Spleen (tissue), 13 donors: ENCODE measurements at regions of chr10 and their contacts with region 1.

Region 1: DNA sequence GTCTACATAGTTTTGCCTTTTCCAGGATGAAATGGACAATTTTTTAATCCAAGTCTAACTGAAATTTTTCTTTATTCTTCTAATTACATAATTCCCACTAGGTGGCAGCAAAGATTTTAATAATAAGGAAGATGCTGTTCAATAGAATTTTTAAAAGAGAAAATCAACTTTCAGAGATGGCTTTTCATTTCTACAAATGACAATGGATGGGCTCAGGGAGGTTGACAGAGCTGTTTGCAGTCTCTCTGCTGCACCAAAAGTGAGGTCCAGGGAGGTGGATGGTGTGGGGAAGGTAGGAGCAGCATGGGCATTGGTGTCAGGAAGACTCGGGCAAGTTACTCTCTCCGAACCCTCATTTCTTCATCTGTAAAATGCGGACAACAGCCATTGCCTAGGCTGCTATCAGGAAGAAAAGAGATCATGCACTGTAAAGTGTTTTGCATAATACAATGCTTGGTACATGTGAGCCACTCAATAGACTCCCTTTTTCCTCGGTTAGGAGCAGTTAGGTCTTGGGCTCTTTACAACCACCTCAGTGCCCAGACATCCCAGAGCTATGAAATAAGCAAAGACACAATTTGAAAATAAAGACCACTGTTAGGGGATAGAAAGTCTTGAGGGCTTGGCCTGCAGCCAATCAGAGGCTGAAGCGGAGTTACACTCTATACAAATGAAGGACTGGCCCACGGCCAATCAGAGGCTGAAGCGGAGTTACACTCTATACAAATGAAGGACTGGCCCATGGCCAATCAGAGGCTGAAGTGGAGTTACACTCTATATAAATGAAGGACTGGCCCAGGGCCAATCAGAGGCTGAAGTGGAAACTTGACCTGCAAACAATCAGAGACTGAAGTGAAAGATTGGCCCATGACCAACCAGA is 107.1 kb downstream of the ABLIM1 start:
- DNase-seq: no peak
- H3K4me3 ChIP-seq: peak overlapping the region in 2 of 8 donors; percentile 23 to 41
- H3K27ac ChIP-seq: peak overlapping the region in 1 of 8 donors; percentile 33
- H3K4me1 ChIP-seq: peaks cover 0 to 36% (median 2%) of the 10 kb centered on the region in 6 donors
- H3K27me3 ChIP-seq: no peaks in the 10 kb centered on the region
- CTCF ChIP-seq: peak in 10 of 11 experiments; percentile 6 to 64 (median 53)
- POLR2A ChIP-seq: no peak

Region 2: DNA sequence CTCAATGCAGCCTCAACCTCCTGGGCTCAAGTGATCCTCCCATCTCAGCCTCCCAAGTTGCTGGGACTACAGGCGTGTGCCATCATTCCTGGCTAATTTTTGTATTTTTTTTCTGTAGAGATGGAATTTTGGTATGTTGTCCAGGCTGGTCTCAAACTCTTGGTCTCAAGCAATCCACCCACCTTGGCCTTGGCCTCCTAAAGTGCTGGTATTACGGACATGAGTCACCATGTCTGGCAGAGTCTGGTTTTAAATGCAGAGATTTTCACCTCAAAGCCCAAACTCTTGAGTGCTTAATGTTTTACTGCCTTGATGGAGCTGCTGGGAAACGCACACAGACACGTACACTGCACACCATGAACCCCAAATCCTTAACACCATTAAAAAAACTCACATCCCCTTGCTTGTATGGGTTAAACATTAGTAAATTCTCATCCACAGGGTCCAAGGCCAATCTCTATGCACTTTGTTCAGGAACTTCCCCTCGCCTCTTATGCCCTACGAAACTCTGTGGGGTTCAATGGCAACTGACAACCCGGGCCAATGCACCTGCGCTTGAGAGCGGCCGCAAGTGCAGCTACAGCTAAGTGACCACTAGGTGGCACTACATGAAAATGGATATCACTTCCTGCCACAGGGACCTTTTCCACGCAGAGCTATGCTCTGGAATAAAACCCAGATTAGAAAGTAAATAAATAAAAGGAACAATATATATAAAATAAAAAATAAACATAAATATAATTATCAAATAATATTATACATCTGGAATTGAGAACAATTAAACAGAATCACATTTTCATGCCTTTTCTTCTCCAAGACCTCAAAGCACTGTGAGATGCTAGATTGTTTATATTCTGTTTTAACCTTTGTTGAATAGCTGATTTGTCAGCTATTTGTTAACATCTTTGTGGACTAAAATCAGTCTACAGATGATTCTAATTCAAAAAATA is 79.8 kb before region 1 on chr10:
- intact Hi-C with region 1: loop called (anchors 5 kb)
- DNase-seq: peak; percentile 90
- H3K4me3 ChIP-seq: no peak overlapping the region
- H3K27ac ChIP-seq: no peak overlapping the region
- H3K4me1 ChIP-seq: peaks cover 0 to 17% (median 7%) of the 10 kb centered on the region in 6 donors
- H3K27me3 ChIP-seq: no peaks in the 10 kb centered on the region
- CTCF ChIP-seq: peak; percentile 74 to 99 (median 94)
- POLR2A ChIP-seq: no peak

Region 3: DNA sequence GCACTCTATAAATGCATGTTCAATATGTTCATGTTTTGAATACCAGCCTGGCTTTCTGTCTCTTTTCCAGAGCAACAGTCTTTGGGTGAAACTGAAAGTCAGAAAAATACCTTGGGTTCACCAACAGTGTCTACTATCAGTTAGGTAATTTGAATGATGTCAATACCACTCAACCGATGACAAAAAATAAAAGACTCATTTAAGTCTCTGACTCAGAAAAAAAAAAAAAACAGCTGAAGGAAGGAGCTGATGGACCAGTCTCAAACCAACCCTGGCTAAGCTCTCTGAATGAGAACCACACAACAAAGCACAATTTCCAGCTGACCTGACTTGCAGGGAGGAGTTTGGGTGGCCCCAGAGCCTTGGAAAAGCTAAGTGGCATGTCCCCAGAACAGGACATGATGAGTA is 64.6 kb after region 1 on chr10:
- intact Hi-C with region 1: no loop called
- DNase-seq: no peak
- H3K4me3 ChIP-seq: no peak overlapping the region
- H3K27ac ChIP-seq: no peak overlapping the region
- H3K4me1 ChIP-seq: peaks cover 0 to 12% (median 2%) of the 10 kb centered on the region in 6 donors
- H3K27me3 ChIP-seq: no peaks in the 10 kb centered on the region
- CTCF ChIP-seq: no peak
- POLR2A ChIP-seq: no peak

Region 4: GRCh38 chr10:114703377-114704107 is 152.5 kb after region 1 on chr10:
- intact Hi-C with region 1: loop called (anchors 5 kb)
- DNase-seq: no peak
- H3K4me3 ChIP-seq: no peak overlapping the region
- H3K27ac ChIP-seq: no peak overlapping the region
- H3K4me1 ChIP-seq: no peaks in the 10 kb centered on the region
- H3K27me3 ChIP-seq: peaks cover 0 to 5% (median 0%) of the 10 kb centered on the region in 7 donors
- CTCF ChIP-seq: peak in 8 of 11 experiments; percentile 8 to 57 (median 44)
- POLR2A ChIP-seq: no peak

Region 5: DNA sequence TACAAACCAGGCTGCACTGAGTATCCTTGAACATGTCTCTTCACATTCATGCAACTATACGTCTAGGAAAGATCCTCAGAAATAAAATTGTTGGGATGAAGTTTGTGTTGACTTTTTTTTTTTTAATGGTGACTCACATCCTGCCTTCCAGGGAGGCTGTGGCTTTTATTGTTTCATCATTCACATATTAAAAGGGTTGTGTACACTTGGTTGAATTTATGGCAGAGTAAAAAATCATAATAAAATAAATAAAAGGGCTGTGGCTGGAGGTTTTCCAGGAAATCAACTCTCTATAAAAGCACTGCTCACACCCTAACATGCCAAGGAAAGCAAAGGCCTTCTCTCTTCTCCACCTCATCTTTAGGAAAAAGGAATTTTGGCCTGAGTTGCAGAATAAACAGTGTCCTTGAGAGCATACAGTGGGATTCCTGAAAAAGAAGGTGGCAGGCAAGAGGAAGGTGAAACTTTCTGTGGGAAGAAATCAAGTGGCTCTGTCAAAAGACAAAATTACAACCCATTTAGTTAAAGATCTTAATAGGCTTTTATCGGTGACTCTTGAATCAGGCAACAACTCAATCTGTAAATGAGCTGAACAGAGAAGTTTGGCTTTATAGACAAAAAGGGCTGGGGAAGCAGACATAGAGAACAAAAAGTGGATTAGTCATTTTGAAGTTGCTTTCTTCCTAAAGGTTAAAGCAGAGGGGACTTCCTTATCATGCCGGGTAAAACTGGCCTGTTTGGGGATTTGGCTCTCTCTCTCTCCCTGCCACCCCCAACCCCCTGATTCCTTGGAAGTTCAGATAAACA is 229.0 kb after region 1 on chr10:
- intact Hi-C with region 1: loop called (anchors 5 kb)
- DNase-seq: no peak
- H3K4me3 ChIP-seq: no peak overlapping the region
- H3K27ac ChIP-seq: no peak overlapping the region
- H3K4me1 ChIP-seq: peaks cover 0 to 6% (median 0%) of the 10 kb centered on the region in 6 donors
- H3K27me3 ChIP-seq: no peaks in the 10 kb centered on the region
- CTCF ChIP-seq: no peak
- POLR2A ChIP-seq: no peak

Region 6: GRCh38 chr10:115129752-115130151 is 578.8 kb after region 1 on chr10:
- intact Hi-C with region 1: loop called (anchors 5 kb)
- DNase-seq: no peak
- H3K4me3 ChIP-seq: no peak overlapping the region
- H3K27ac ChIP-seq: no peak overlapping the region
- H3K4me1 ChIP-seq: no peaks in the 10 kb centered on the region
- H3K27me3 ChIP-seq: no peaks in the 10 kb centered on the region
- CTCF ChIP-seq: peak in 4 of 11 experiments; percentile 13 to 35 (median 28)
- POLR2A ChIP-seq: no peak